PC-9 (cell line): ENCODE measurements at regions of chr14 and their contacts with region 1.

Region 1: DNA sequence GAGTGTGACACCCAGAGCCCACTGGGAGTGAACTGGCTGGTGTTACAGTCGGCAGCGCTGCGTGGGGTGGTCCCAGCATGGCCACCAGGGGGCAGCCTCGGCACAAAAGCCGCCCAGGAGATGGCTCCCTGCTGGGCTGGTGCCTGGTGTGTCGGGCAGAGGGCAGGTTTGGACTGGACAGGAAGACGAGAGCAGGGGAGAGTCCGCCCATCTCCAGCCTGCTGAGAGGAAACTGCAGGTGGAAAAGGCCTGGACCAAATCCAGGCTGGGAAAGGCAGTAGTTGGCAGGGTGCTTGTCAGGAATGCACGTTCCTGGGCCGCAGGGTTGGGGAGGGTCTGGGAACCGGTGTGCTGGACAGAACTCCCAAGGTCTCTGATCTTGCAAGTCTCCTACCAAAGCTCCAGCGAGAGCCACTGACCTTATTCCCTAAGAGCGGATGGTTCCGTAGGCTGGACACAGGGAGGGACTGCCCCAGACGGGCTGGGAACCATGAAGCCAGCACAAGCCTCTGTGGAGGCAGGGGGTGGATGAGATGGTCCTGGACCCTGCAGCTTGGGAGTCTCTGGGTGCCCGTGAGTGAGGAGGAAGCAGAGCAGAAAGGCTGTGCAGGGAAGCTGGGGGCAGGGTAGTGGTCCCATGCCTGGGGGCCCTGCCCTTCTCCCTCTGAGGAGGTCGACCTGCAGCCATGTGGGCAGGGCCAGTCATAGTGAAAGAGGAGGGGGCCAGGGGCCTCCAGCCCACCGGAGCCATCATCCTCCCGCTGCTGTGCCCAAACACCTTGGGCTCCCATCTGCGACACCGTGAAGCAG is 1.8 kb downstream of the AHNAK2 start:
- DNase-seq: peak; percentile 67 to 86
- H3K4me3 ChIP-seq: no peak overlapping the region
- H3K27ac ChIP-seq: no peak overlapping the region
- H3K4me1 ChIP-seq: peaks cover 60% of the 10 kb centered on the region
- H3K27me3 ChIP-seq: no peaks in the 10 kb centered on the region
- CTCF ChIP-seq: peak; percentile 87

Region 2: GRCh38 chr14:104784846-104785707 is 191.3 kb before region 1 on chr14:
- CTCF ChIA-PET with region 1: no interaction called
- POLR2A ChIA-PET with region 1: no interaction called
- intact Hi-C with region 1: no loop called
- DNase-seq: no peak
- H3K4me3 ChIP-seq: no peak overlapping the region
- H3K27ac ChIP-seq: no peak overlapping the region
- H3K4me1 ChIP-seq: no peaks in the 10 kb centered on the region
- H3K27me3 ChIP-seq: no peaks in the 10 kb centered on the region
- CTCF ChIP-seq: no peak

Region 3: GRCh38 chr14:104895786-104896661 is 80.4 kb before region 1 on chr14:
- CTCF ChIA-PET with region 1: no interaction called
- POLR2A ChIA-PET with region 1: interaction called, 16 read pairs
- intact Hi-C with region 1: loop called (anchors 2 kb)
- DNase-seq: no peak
- H3K4me3 ChIP-seq: no peak overlapping the region
- H3K27ac ChIP-seq: no peak overlapping the region
- H3K4me1 ChIP-seq: no peaks in the 10 kb centered on the region
- H3K27me3 ChIP-seq: no peaks in the 10 kb centered on the region
- CTCF ChIP-seq: no peak

Region 4: GRCh38 chr14:105032926-105033325 is 56.5 kb after region 1 on chr14:
- CTCF ChIA-PET with region 1: interaction called, 4 read pairs
- POLR2A ChIA-PET with region 1: interaction called, 4 read pairs
- intact Hi-C with region 1: loop called (anchors 2 kb)
- DNase-seq: no peak
- H3K4me3 ChIP-seq: peak overlapping the region; percentile 46; the same call in 1 of the 2 replicates
- H3K27ac ChIP-seq: peak overlapping the region; percentile 98
- H3K4me1 ChIP-seq: peaks cover 29% of the 10 kb centered on the region
- H3K27me3 ChIP-seq: no peaks in the 10 kb centered on the region
- CTCF ChIP-seq: no peak

Region 5: DNA sequence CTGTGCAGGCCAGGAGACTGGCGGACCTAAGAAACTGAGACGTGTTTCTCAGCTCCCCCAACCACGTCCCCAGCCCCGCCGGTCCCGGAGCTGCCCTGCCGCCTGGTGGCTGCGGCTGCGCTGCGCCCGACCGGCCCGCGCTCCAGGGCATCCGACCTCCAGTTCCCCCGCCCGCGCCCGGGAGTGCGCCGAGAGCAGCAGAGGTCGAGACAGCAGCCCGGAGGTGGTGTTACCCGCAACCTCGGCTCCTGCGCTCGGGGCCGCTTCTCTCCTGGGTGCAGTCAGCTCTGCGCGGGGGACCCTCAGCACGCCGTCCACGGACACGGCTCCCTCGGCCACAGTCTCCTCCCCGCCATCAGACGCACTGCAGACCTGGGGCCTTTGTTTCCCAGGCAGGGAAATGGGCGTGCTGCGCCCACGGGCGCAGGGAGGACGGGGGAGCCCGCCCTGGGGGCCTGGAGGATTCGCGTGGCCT is 110.5 kb after region 1 on chr14:
- CTCF ChIA-PET with region 1: interaction called, 4 read pairs
- POLR2A ChIA-PET with region 1: interaction called, 6 read pairs
- intact Hi-C with region 1: loop called (anchors 1 kb)
- DNase-seq: peak; percentile 73 to 85
- H3K4me3 ChIP-seq: peak overlapping the region; percentile 80
- H3K27ac ChIP-seq: peak overlapping the region; percentile 80
- H3K4me1 ChIP-seq: peaks cover 43% of the 10 kb centered on the region
- H3K27me3 ChIP-seq: no peaks in the 10 kb centered on the region
- CTCF ChIP-seq: peak; percentile 70

Region 6: GRCh38 chr14:105281371-105282097 is 305.1 kb after region 1 on chr14:
- CTCF ChIA-PET with region 1: no interaction called
- POLR2A ChIA-PET with region 1: no interaction called
- intact Hi-C with region 1: loop called (anchors 5 kb)
- DNase-seq: peak in 1 of 2 experiments; percentile 20
- H3K4me3 ChIP-seq: no peak overlapping the region
- H3K27ac ChIP-seq: no peak overlapping the region
- H3K4me1 ChIP-seq: no peaks in the 10 kb centered on the region
- H3K27me3 ChIP-seq: no peaks in the 10 kb centered on the region
- CTCF ChIP-seq: peak; percentile 69

Region 7: GRCh38 chr14:105480952-105481801 is 504.8 kb after region 1 on chr14:
- CTCF ChIA-PET with region 1: no interaction called
- POLR2A ChIA-PET with region 1: no interaction called
- intact Hi-C with region 1: loop called (anchors 5 kb)
- DNase-seq: peak; percentile 76 to 92
- H3K4me3 ChIP-seq: peak overlapping the region; percentile 67
- H3K27ac ChIP-seq: peak overlapping the region; percentile 90
- H3K4me1 ChIP-seq: peaks cover 32% of the 10 kb centered on the region
- H3K27me3 ChIP-seq: no peaks in the 10 kb centered on the region
- CTCF ChIP-seq: peak; percentile 96